Caco-2 (cell line): ENCODE measurements at regions of chr4 and their contacts with region 1.

Region 1: DNA sequence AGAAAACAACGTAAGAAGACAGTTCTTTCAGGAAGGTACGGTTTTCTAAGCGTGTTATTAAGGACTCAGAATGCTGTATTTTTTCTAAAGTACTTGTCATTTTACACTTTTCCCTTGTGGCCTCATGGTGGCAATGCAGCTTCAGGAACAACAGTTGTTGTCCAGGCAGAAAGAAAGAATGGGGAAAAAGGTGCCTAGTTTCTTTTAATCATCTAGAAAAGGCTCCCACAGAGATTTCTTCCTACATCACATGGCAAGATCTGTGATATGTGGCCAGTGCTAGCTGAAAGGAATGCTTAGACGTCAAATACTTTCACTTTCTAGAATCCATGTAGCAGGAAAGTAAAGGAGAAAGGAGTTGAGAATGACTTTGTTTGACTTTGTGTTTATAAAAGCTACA is 49.0 kb upstream of the TRAM1L1 start:
- DNase-seq: peak in 1 of 2 experiments; percentile 29
- H3K4me3 ChIP-seq: no peak overlapping the region
- H3K4me3 Mint-ChIP-seq: no peak overlapping the region
- H3K27ac Mint-ChIP-seq: no peak overlapping the region
- H3K4me1 ChIP-seq: 0 out of 2 replicates have a peak, but pooled peaks cover 5% of the 10 kb centered on the region
- H3K4me1 Mint-ChIP-seq: peaks cover 6% of the 10 kb centered on the region
- H3K27me3 ChIP-seq: no peaks in the 10 kb centered on the region
- H3K27me3 Mint-ChIP-seq: no peaks in the 10 kb centered on the region
- CTCF ChIP-seq: peak; percentile 31 to 52

Region 2: GRCh38 chr4:117084866-117085701 is 49.3 kb before region 1 on chr4 and contains the start of gene TRAM1L1:
- CTCF ChIA-PET with region 1: no interaction called
- POLR2A ChIA-PET with region 1: no interaction called
- intact Hi-C with region 1: loop called (anchors 1 kb)
- DNase-seq: peak; percentile 62 to 65
- H3K4me3 ChIP-seq: peak within 1 kb of the TSS; percentile 60
- H3K4me3 Mint-ChIP-seq: peak within 1 kb of the TSS; percentile 69
- H3K27ac Mint-ChIP-seq: peak within 1 kb of the TSS; percentile 35
- H3K4me1 ChIP-seq: peaks cover 5% of the 10 kb centered on the region; the same call in 1 of the 2 replicates
- H3K4me1 Mint-ChIP-seq: peaks cover 7% of the 10 kb centered on the region
- H3K27me3 ChIP-seq: no peaks in the 10 kb centered on the region
- H3K27me3 Mint-ChIP-seq: no peaks in the 10 kb centered on the region
- CTCF ChIP-seq: no peak
- total RNA-seq, gene TRAM1L1: 0.16 and 0.48 TPM in 2 replicates

Region 3: GRCh38 chr4:117327491-117327890 is 193.1 kb after region 1 on chr4:
- CTCF ChIA-PET with region 1: no interaction called
- POLR2A ChIA-PET with region 1: no interaction called
- intact Hi-C with region 1: no loop called
- DNase-seq: no peak
- H3K4me3 ChIP-seq: no peak overlapping the region
- H3K4me3 Mint-ChIP-seq: no peak overlapping the region
- H3K27ac Mint-ChIP-seq: no peak overlapping the region
- H3K4me1 ChIP-seq: no peaks in the 10 kb centered on the region
- H3K4me1 Mint-ChIP-seq: peaks cover 7% of the 10 kb centered on the region
- H3K27me3 ChIP-seq: no peaks in the 10 kb centered on the region
- H3K27me3 Mint-ChIP-seq: no peaks in the 10 kb centered on the region
- CTCF ChIP-seq: no peak

Region 4: DNA sequence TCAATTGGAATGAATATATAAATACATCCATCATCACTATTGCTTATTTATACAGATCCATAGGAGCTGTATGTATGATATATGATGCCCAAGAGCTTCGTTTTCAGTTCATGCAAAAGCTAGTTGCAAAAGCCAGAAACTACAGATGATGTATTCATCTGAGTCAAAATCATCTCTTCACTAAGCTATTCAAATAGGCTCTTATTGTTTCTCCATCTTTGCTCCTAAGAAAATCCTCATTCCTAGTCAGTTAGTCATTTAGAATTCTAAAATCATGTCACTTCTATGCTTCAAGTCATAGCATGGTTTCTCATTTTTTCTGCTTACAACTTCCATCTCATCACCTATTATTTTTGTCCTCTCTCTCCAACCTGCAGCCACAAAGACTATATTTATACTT is 251.1 kb after region 1 on chr4:
- CTCF ChIA-PET with region 1: no interaction called
- POLR2A ChIA-PET with region 1: no interaction called
- intact Hi-C with region 1: loop called (anchors 5 kb)
- DNase-seq: no peak
- H3K4me3 ChIP-seq: no peak overlapping the region
- H3K4me3 Mint-ChIP-seq: no peak overlapping the region
- H3K27ac Mint-ChIP-seq: no peak overlapping the region
- H3K4me1 ChIP-seq: no peaks in the 10 kb centered on the region
- H3K4me1 Mint-ChIP-seq: no peaks in the 10 kb centered on the region
- H3K27me3 ChIP-seq: no peaks in the 10 kb centered on the region
- H3K27me3 Mint-ChIP-seq: peaks cover 2% of the 10 kb centered on the region
- CTCF ChIP-seq: no peak

Region 5: DNA sequence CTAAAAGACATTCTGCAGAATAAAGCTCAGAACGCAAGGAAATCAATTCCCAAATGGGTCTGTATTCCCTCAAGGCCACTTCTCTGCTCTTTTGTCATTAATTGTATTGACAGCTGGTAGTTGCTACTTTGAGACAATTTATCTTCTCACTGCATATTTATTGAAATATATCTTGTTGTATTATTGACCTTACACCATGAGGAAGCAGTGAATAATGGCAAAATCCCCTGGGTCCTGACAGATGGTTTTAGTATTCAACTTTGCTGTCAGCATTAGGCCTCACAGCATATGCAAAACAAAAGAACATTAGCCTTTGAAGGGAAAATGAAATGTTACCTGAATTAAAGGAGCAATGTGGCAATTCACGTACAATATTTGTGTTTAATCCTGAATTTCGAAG is 357.1 kb after region 1 on chr4:
- CTCF ChIA-PET with region 1: no interaction called
- POLR2A ChIA-PET with region 1: no interaction called
- intact Hi-C with region 1: no loop called
- DNase-seq: no peak
- H3K4me3 ChIP-seq: no peak overlapping the region
- H3K4me3 Mint-ChIP-seq: no peak overlapping the region
- H3K27ac Mint-ChIP-seq: no peak overlapping the region
- H3K4me1 ChIP-seq: no peaks in the 10 kb centered on the region
- H3K4me1 Mint-ChIP-seq: peaks cover 7% of the 10 kb centered on the region
- H3K27me3 ChIP-seq: no peaks in the 10 kb centered on the region
- H3K27me3 Mint-ChIP-seq: no peaks in the 10 kb centered on the region
- CTCF ChIP-seq: no peak

Region 6: GRCh38 chr4:117560329-117560728 is 425.9 kb after region 1 on chr4:
- CTCF ChIA-PET with region 1: no interaction called
- POLR2A ChIA-PET with region 1: no interaction called
- intact Hi-C with region 1: loop called (anchors 1 kb)
- DNase-seq: no peak
- H3K4me3 ChIP-seq: no peak overlapping the region
- H3K4me3 Mint-ChIP-seq: no peak overlapping the region
- H3K27ac Mint-ChIP-seq: no peak overlapping the region
- H3K4me1 ChIP-seq: no peaks in the 10 kb centered on the region
- H3K4me1 Mint-ChIP-seq: no peaks in the 10 kb centered on the region
- H3K27me3 ChIP-seq: no peaks in the 10 kb centered on the region
- H3K27me3 Mint-ChIP-seq: peaks cover 3% of the 10 kb centered on the region
- CTCF ChIP-seq: no peak

Region 7: GRCh38 chr4:117692538-117692937 is 558.2 kb after region 1 on chr4:
- CTCF ChIA-PET with region 1: no interaction called
- POLR2A ChIA-PET with region 1: no interaction called
- intact Hi-C with region 1: loop called (anchors 1 kb)
- DNase-seq: peak in 1 of 2 experiments; percentile 5
- H3K4me3 ChIP-seq: no peak overlapping the region
- H3K4me3 Mint-ChIP-seq: no peak overlapping the region
- H3K27ac Mint-ChIP-seq: no peak overlapping the region
- H3K4me1 ChIP-seq: no peaks in the 10 kb centered on the region
- H3K4me1 Mint-ChIP-seq: no peaks in the 10 kb centered on the region
- H3K27me3 ChIP-seq: no peaks in the 10 kb centered on the region
- H3K27me3 Mint-ChIP-seq: peaks cover 3% of the 10 kb centered on the region
- CTCF ChIP-seq: no peak

Region 8: GRCh38 chr4:118034053-118034785 is 899.8 kb after region 1 on chr4 and contains the start of gene NDST3:
- CTCF ChIA-PET with region 1: no interaction called
- POLR2A ChIA-PET with region 1: no interaction called
- intact Hi-C with region 1: loop called (anchors 1 kb)
- DNase-seq: peak; percentile 41 to 58
- H3K4me3 ChIP-seq: peak within 1 kb of the TSS; percentile 28
- H3K4me3 Mint-ChIP-seq: peak within 1 kb of the TSS; percentile 70
- H3K27ac Mint-ChIP-seq: no peak within 1 kb of the TSS
- H3K4me1 ChIP-seq: no peaks in the 10 kb centered on the region
- H3K4me1 Mint-ChIP-seq: no peaks in the 10 kb centered on the region
- H3K27me3 ChIP-seq: peaks cover 2% of the 10 kb centered on the region; the same call in 1 of the 2 replicates
- H3K27me3 Mint-ChIP-seq: peaks cover 12% of the 10 kb centered on the region
- CTCF ChIP-seq: peak; percentile 21 to 33
- total RNA-seq, gene NDST3: not detected in 2 replicates

Region 9: GRCh38 chr4:118278473-118279274 is 1144.3 kb after region 1 on chr4:
- CTCF ChIA-PET with region 1: no interaction called
- POLR2A ChIA-PET with region 1: no interaction called
- intact Hi-C with region 1: loop called (anchors 10 kb)
- DNase-seq: peak; percentile 97 to 98
- H3K4me3 ChIP-seq: peak overlapping the region; percentile 87
- H3K4me3 Mint-ChIP-seq: peak overlapping the region; percentile 96
- H3K27ac Mint-ChIP-seq: peak overlapping the region; percentile 98
- H3K4me1 ChIP-seq: peaks cover 34% of the 10 kb centered on the region
- H3K4me1 Mint-ChIP-seq: peaks cover 5% of the 10 kb centered on the region
- H3K27me3 ChIP-seq: no peaks in the 10 kb centered on the region
- H3K27me3 Mint-ChIP-seq: no peaks in the 10 kb centered on the region
- CTCF ChIP-seq: no peak